Esophagus squamous epithelium (tissue), 5 donors: ENCODE measurements at regions of chr2 and their contacts with region 1.

Region 1: DNA sequence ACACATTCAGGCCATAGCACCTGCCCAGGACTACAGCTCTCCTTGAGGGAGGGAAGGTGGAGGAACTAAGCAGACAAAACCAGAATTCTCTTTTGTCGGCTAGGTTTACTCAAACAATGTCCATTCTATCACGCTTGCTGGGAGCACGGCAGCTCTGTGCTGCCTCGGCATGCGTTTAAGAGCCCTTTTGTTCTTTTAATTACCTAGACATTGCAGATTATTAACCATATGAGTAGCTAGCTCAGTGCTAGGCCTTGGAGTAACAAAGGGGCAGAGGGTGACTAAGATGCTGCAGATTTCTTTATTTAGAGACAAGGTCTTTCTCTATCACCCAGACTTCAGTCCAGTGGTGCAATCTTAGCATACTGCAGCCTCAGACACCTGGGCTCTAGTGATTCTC is 11.0 kb downstream of the MSGN1 start:
- DNase-seq: no peak
- H3K4me3 ChIP-seq: no peak overlapping the region
- H3K27ac ChIP-seq: no peak overlapping the region
- H3K4me1 ChIP-seq: peaks cover 6 to 34% (median 17%) of the 10 kb centered on the region in 3 donors
- H3K27me3 ChIP-seq: peaks cover 0 to 54% (median 0%) of the 10 kb centered on the region in 4 donors
- CTCF ChIP-seq: no peak
- POLR2A ChIP-seq: no peak

Region 2: GRCh38 chr2:17706845-17707244 is 120.5 kb before region 1 on chr2:
- intact Hi-C with region 1: no loop called
- DNase-seq: no peak
- H3K4me3 ChIP-seq: no peak overlapping the region
- H3K27ac ChIP-seq: no peak overlapping the region
- H3K4me1 ChIP-seq: no peaks in the 10 kb centered on the region
- H3K27me3 ChIP-seq: no peaks in the 10 kb centered on the region
- CTCF ChIP-seq: no peak
- POLR2A ChIP-seq: no peak

Region 3: GRCh38 chr2:17719562-17720371 is 107.5 kb before region 1 on chr2:
- intact Hi-C with region 1: loop called (anchors 5 kb)
- DNase-seq: no peak
- H3K4me3 ChIP-seq: no peak overlapping the region
- H3K27ac ChIP-seq: no peak overlapping the region
- H3K4me1 ChIP-seq: no peaks in the 10 kb centered on the region
- H3K27me3 ChIP-seq: no peaks in the 10 kb centered on the region
- CTCF ChIP-seq: peak; percentile 65 to 81 (median 75)
- POLR2A ChIP-seq: no peak